Activated CD4-positive, alpha-beta memory T cell treated with anti-CD3 and anti-CD28 coated beads, Interleukin-2, amount 10 ng/mL, durations not matched to agents 7 days and 5 days (primary cell): ENCODE measurements at regions of chr11 and their contacts with region 1.

Region 1: GRCh38 chr11:72413914-72414628 is 20.3 kb downstream of the CLPB start:
- DNase-seq: peak; percentile 80
- H3K4me3 Mint-ChIP-seq: no peak overlapping the region
- H3K27ac Mint-ChIP-seq: no peak overlapping the region
- H3K4me1 Mint-ChIP-seq: peaks cover 16% of the 10 kb centered on the region
- H3K27me3 Mint-ChIP-seq: no peaks in the 10 kb centered on the region

Region 2: DNA sequence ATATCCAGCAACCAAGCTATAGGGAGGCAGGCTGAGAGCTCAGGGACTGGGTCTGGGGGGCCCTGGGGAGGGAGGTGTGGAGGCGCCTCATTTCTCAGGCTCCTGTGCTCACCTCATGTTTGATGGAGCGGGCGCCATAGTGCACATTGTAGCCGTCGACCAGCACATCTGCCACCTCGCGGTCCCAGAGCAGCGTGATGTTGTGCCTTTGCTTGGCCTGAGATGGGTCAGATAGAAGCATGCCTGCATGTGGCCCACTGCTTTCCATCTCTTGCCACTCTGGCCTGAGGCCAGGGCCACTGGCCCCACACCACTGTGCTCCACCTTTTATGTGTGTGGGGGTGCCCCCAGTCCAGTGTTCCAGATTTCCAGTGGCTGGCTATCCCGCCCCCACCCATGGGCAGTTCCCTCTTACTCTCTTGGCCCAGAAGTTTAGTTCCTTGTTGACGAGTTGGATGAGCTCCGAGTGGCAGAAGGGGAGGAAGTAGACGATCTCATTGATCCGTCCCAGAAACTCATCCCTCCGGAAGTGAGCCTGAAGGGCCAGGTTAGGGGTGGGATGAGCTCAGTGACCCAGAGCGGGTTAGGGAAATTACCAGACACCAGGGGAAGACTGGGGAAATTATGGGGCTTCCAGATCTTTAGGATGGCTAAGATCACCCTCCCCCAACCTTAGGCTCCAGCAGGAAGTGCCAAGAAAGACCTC is 120.0 kb before region 1 on chr11:
- CTCF ChIA-PET with region 1: interaction called, 12 read pairs
- POLR2A ChIA-PET with region 1: interaction called, 3 read pairs
- DNase-seq: no peak
- H3K4me3 Mint-ChIP-seq: no peak overlapping the region
- H3K27ac Mint-ChIP-seq: no peak overlapping the region
- H3K4me1 Mint-ChIP-seq: no peaks in the 10 kb centered on the region
- H3K27me3 Mint-ChIP-seq: no peaks in the 10 kb centered on the region

Region 3: DNA sequence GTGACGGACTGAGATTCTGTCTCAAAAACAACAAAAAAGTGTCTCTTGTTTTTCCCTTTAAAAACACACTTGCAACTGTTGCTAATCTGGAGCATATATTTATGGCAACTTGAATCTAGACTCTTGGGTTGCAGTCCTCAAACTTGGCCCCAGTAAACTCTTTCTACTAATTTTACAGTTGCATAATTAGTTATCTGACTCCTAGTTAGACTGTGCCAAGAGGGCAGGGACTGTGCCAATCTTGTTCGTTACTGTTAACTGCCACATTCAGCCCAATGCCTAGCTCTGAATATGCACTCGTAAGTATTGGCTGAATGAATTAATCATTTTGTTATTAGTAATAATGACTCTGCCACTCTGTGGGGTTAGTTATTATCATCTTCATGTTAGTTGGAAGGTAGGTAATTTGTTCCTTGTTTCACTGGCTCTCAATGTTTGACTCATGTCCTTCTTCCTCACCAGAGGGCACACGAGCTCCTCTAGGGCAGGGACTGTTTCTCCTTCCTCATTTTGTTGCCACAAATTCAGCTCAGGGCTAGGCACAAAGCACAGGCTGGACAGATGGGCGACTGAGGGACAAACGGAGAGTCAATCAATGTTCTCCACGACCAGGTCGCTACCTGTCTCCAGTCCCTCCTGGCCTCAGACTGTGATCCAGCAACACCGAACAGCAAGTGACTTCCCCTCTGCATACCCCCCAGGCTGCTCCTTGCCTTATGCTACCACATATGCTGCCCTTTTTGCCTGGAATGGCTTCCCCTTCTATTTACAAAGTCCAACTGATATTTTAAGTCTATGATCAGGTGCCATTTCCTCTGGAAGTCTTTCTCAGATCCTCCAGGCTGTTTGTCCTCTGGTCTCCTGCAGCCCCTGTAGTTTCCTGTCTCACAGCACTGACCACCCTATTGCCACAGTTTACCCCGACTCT is 11.2 kb after region 1 on chr11:
- CTCF ChIA-PET with region 1: interaction called, 50 read pairs
- POLR2A ChIA-PET with region 1: no interaction called
- DNase-seq: no peak
- H3K4me3 Mint-ChIP-seq: no peak overlapping the region
- H3K27ac Mint-ChIP-seq: no peak overlapping the region
- H3K4me1 Mint-ChIP-seq: peaks cover 7% of the 10 kb centered on the region
- H3K27me3 Mint-ChIP-seq: no peaks in the 10 kb centered on the region